Endothelial cell of umbilical vein (primary cell): ENCODE measurements at regions of chr22 and their contacts with region 1.

Region 1: DNA sequence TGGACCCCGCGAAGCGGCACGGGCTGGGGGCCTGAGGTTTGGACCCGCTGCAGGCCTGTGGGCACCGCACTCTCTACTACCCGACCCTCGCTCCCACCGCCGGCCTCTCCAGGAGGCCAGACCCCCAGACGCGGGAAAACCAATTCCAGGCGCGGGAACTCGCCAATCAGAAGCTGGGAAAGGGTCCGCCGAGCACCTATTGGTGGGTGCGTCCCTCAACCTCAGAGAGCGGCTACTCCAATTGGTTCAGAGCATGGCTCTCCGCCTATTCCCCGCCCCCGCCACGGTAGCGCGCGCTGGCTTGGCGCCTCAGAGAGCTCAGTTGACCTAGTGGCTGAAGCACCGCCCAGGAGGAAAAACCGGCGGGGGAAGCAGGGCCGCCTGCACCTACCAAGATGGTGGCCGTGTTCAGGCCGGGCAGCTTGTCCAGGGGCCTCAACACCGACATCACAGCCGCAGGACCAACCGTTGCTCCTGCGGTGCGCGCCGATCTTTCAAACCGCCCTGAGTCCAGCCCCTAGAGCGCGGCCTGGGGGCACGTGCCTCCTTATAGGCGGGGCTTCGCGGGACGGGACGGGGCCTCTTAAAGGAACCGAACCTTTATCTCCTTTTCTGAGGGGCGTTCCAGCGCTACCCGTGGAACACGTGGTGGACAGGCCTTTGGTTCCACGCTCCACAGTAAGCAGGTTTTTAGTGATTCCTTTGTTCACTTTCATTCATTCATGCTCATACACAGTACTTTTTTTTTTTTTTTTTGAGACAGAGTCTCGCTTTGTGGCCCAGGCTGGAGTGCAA is at the start of gene CENPM:
- DNase-seq: peak; percentile 96
- H3K4me3 ChIP-seq: peak within 1 kb of the TSS; percentile 39 to 85 (median 57)
- H3K27ac ChIP-seq: peak within 1 kb of the TSS; percentile 44
- H3K4me1 ChIP-seq: peaks cover 33% of the 10 kb centered on the region
- H3K27me3 ChIP-seq: no peaks in the 10 kb centered on the region
- CTCF ChIP-seq: no peak
- POLR2A ChIP-seq: no peak
- total RNA-seq, gene CENPM: 30.4 and 34.5 TPM in 2 replicates

Region 2: GRCh38 chr22:41832553-41833368 is 114.1 kb before region 1 on chr22 and contains the start of gene SREBF2:
- CTCF ChIA-PET with region 1: interaction called, 11 read pairs
- POLR2A ChIA-PET with region 1: interaction called, 4 read pairs
- dilution Hi-C with region 1: no loop called
- intact Hi-C with region 1: loop called (anchors 2 kb)
- DNase-seq: peak; percentile 100
- H3K4me3 ChIP-seq: peak within 1 kb of the TSS; percentile 59 to 81 (median 75)
- H3K27ac ChIP-seq: peak within 1 kb of the TSS; percentile 73
- H3K4me1 ChIP-seq: peaks cover 16% of the 10 kb centered on the region
- H3K27me3 ChIP-seq: no peaks in the 10 kb centered on the region
- CTCF ChIP-seq: no peak
- POLR2A ChIP-seq: peak; percentile 68
- total RNA-seq, gene SREBF2: 136 and 144 TPM in 2 replicates

Region 3: GRCh38 chr22:41888627-41889200 is 58.1 kb before region 1 on chr22:
- CTCF ChIA-PET with region 1: no interaction called
- POLR2A ChIA-PET with region 1: no interaction called
- dilution Hi-C with region 1: no loop called
- intact Hi-C with region 1: no loop called
- DNase-seq: no peak
- H3K4me3 ChIP-seq: no peak overlapping the region
- H3K27ac ChIP-seq: no peak overlapping the region
- H3K4me1 ChIP-seq: no peaks in the 10 kb centered on the region
- H3K27me3 ChIP-seq: no peaks in the 10 kb centered on the region
- CTCF ChIP-seq: no peak
- POLR2A ChIP-seq: no peak